Activated CD4-positive, alpha-beta memory T cell treated with anti-CD3 and anti-CD28 coated beads, Interleukin-2, amount 10 ng/mL, durations not matched to agents 7 days and 5 days (primary cell): ENCODE measurements at regions of chr4 and their contacts with region 1.

Region 1: GRCh38 chr4:36399762-36400353 is 118.4 kb downstream of the DTHD1 start:
- DNase-seq: peak; percentile 44
- H3K4me3 Mint-ChIP-seq: no peak overlapping the region
- H3K27ac Mint-ChIP-seq: no peak overlapping the region
- H3K4me1 Mint-ChIP-seq: peaks cover 6% of the 10 kb centered on the region
- H3K27me3 Mint-ChIP-seq: peaks cover 21% of the 10 kb centered on the region

Region 2: DNA sequence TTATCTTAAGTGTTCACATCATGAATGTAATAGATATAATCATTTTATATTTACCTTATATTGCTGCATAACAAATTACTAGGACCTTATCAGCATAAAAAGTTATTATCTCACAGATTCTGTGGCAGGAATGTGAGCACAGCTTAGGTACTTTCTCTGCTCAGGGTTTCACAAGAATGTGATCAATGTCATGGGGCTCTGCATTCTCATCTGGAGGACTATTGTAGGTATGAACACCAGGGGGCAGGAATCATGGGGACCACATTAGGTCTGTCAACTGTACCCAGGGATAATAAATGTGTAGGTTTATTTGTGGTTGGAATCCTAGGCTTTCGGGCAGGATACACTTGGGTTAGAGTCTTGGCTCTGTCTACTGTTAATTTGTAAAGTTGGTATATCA is 674.7 kb before region 1 on chr4:
- CTCF ChIA-PET with region 1: no interaction called
- POLR2A ChIA-PET with region 1: no interaction called
- DNase-seq: no peak
- H3K4me3 Mint-ChIP-seq: no peak overlapping the region
- H3K27ac Mint-ChIP-seq: no peak overlapping the region
- H3K4me1 Mint-ChIP-seq: no peaks in the 10 kb centered on the region
- H3K27me3 Mint-ChIP-seq: no peaks in the 10 kb centered on the region

Region 3: GRCh38 chr4:36198068-36198808 is 201.6 kb before region 1 on chr4:
- CTCF ChIA-PET with region 1: no interaction called
- POLR2A ChIA-PET with region 1: no interaction called
- DNase-seq: no peak
- H3K4me3 Mint-ChIP-seq: no peak overlapping the region
- H3K27ac Mint-ChIP-seq: no peak overlapping the region
- H3K4me1 Mint-ChIP-seq: peaks cover 13% of the 10 kb centered on the region
- H3K27me3 Mint-ChIP-seq: no peaks in the 10 kb centered on the region

Region 4: GRCh38 chr4:36310793-36311192 is 89.1 kb before region 1 on chr4:
- CTCF ChIA-PET with region 1: no interaction called
- POLR2A ChIA-PET with region 1: no interaction called
- DNase-seq: peak; percentile 48
- H3K4me3 Mint-ChIP-seq: peak overlapping the region; percentile 28
- H3K27ac Mint-ChIP-seq: peak overlapping the region; percentile 74
- H3K4me1 Mint-ChIP-seq: peaks cover 35% of the 10 kb centered on the region
- H3K27me3 Mint-ChIP-seq: no peaks in the 10 kb centered on the region

Region 5: GRCh38 chr4:36351082-36351666 is 48.7 kb before region 1 on chr4:
- CTCF ChIA-PET with region 1: interaction called, 61 read pairs
- POLR2A ChIA-PET with region 1: interaction called, 3 read pairs
- DNase-seq: peak; percentile 79
- H3K4me3 Mint-ChIP-seq: no peak overlapping the region
- H3K27ac Mint-ChIP-seq: no peak overlapping the region
- H3K4me1 Mint-ChIP-seq: peaks cover 36% of the 10 kb centered on the region
- H3K27me3 Mint-ChIP-seq: peaks cover 3% of the 10 kb centered on the region

Region 6: DNA sequence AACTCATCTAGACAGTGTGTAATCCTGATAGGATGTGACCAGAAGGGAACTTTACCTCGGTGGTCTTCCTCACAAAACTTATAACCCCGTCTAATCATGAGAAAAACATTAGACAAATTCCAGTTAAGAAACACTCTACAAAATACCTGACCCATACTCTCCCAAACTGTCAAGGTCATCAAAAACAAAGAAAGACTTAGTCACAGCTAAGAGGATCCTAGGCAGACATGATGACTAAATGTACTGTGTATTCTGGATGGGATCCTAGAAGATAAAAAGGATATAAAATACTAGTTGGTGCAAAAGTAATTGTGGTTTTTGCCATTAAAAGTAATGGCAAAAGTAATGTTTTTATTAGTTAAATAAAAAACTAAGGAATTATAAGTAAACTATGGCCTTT is 36.8 kb before region 1 on chr4:
- CTCF ChIA-PET with region 1: interaction called, 11 read pairs
- POLR2A ChIA-PET with region 1: no interaction called
- DNase-seq: no peak
- H3K4me3 Mint-ChIP-seq: no peak overlapping the region
- H3K27ac Mint-ChIP-seq: no peak overlapping the region
- H3K4me1 Mint-ChIP-seq: no peaks in the 10 kb centered on the region
- H3K27me3 Mint-ChIP-seq: no peaks in the 10 kb centered on the region

Region 7: DNA sequence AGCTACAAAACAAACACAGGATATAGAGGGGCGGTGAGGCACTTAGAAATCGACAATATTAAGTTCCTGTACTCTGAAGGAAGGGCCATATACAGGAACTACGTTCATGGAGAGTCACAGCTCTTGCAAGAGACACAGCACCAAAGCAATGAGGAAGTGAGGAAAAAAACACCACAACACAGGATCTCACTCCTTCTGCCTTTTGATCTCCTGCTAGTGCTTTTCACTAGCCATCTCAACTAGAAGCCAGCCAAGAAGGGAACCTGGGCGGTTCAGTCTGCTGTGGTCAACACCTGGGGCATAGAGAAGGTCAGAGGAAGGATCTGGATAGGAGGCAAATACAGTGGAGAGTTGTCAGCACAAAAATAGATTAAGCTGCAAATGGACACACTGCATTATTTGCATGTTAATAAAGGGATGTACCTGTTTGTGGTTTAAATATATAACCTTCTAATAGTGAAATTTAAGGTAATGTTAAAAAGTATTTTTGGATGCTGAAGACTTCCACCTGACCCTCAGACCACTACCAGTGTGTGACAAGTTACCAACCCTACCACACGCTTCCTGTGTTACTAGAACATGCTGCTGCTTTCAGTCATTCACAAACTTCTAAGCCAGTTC is 13.8 kb before region 1 on chr4:
- CTCF ChIA-PET with region 1: interaction called, 16 read pairs
- POLR2A ChIA-PET with region 1: interaction called, 15 read pairs
- DNase-seq: peak; percentile 57
- H3K4me3 Mint-ChIP-seq: peak overlapping the region; percentile 21
- H3K27ac Mint-ChIP-seq: peak overlapping the region; percentile 86
- H3K4me1 Mint-ChIP-seq: peaks cover 26% of the 10 kb centered on the region
- H3K27me3 Mint-ChIP-seq: no peaks in the 10 kb centered on the region